ENCODE measurements at regions of chr18 and their contacts with region 1.

Region 1: DNA sequence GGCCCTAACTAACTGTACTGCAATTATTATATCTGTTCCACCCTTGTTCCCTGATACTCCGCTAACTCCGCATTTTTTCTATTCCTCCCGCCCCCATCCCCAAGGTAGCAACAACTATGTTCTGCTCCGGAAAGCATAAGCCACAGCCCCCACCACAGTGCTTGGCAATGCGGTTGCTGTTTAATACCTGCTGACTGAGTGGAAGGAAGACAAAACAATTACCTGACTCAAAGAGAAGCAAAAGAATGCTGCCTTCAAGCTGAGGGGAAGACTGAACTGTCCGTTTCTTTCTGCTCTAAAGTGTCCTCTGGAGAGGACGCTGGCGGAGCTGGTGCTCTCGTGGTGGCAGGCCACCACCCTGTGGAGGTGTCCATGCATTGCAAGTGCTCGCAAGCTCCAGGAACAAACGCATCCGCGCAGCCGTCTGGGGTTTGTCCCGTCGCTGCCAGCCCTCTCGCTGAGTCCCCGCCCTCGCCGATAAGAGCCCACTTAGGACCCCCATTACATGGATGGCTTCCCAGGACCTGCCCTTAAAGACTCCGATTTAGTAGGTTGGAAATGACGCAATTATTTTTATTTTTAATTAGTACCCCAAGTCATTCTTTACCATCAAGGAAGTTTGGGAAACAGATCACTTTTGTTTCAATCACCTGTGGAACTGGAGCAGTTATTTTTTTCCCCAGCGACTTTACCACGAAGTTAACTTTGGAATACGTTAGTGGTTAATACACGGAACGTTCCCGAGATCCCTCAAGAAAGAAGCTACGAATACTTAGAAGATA is 1.6 kb upstream of the MYL12A start:
- DNase-seq: peak; percentile 85
- H3K4me3 Mint-ChIP-seq: peak overlapping the region; percentile 99
- H3K27ac Mint-ChIP-seq: peak overlapping the region; percentile 100
- H3K4me1 Mint-ChIP-seq: peaks cover 29% of the 10 kb centered on the region
- H3K27me3 Mint-ChIP-seq: no peaks in the 10 kb centered on the region

Region 2: GRCh38 chr18:2655178-2655953 is 590.7 kb before region 1 on chr18 and contains the start of gene SMCHD1:
- CTCF ChIA-PET with region 1: no interaction called
- POLR2A ChIA-PET with region 1: interaction called, 21 read pairs
- DNase-seq: peak; percentile 87
- H3K4me3 Mint-ChIP-seq: peak within 1 kb of the TSS; percentile 95
- H3K27ac Mint-ChIP-seq: peak within 1 kb of the TSS; percentile 96
- H3K4me1 Mint-ChIP-seq: peaks cover 26% of the 10 kb centered on the region
- H3K27me3 Mint-ChIP-seq: peaks cover 1% of the 10 kb centered on the region
- total RNA-seq, gene SMCHD1: 162 TPM

Region 3: GRCh38 chr18:2971741-2972552 is 274.1 kb before region 1 on chr18:
- CTCF ChIA-PET with region 1: no interaction called
- POLR2A ChIA-PET with region 1: interaction called, 22 read pairs
- DNase-seq: peak; percentile 82
- H3K4me3 Mint-ChIP-seq: peak overlapping the region; percentile 69
- H3K27ac Mint-ChIP-seq: peak overlapping the region; percentile 94
- H3K4me1 Mint-ChIP-seq: peaks cover 83% of the 10 kb centered on the region
- H3K27me3 Mint-ChIP-seq: no peaks in the 10 kb centered on the region

Region 4: GRCh38 chr18:2994603-2995432 is 251.2 kb before region 1 on chr18:
- CTCF ChIA-PET with region 1: interaction called, 56 read pairs
- POLR2A ChIA-PET with region 1: interaction called, 39 read pairs
- DNase-seq: peak; percentile 77
- H3K4me3 Mint-ChIP-seq: no peak overlapping the region
- H3K27ac Mint-ChIP-seq: peak overlapping the region; percentile 42
- H3K4me1 Mint-ChIP-seq: peaks cover 77% of the 10 kb centered on the region
- H3K27me3 Mint-ChIP-seq: no peaks in the 10 kb centered on the region

Region 5: GRCh38 chr18:3093624-3094337 is 152.3 kb before region 1 on chr18:
- CTCF ChIA-PET with region 1: no interaction called
- POLR2A ChIA-PET with region 1: no interaction called
- DNase-seq: no peak
- H3K4me3 Mint-ChIP-seq: no peak overlapping the region
- H3K27ac Mint-ChIP-seq: no peak overlapping the region
- H3K4me1 Mint-ChIP-seq: peaks cover 11% of the 10 kb centered on the region
- H3K27me3 Mint-ChIP-seq: no peaks in the 10 kb centered on the region

Region 6: DNA sequence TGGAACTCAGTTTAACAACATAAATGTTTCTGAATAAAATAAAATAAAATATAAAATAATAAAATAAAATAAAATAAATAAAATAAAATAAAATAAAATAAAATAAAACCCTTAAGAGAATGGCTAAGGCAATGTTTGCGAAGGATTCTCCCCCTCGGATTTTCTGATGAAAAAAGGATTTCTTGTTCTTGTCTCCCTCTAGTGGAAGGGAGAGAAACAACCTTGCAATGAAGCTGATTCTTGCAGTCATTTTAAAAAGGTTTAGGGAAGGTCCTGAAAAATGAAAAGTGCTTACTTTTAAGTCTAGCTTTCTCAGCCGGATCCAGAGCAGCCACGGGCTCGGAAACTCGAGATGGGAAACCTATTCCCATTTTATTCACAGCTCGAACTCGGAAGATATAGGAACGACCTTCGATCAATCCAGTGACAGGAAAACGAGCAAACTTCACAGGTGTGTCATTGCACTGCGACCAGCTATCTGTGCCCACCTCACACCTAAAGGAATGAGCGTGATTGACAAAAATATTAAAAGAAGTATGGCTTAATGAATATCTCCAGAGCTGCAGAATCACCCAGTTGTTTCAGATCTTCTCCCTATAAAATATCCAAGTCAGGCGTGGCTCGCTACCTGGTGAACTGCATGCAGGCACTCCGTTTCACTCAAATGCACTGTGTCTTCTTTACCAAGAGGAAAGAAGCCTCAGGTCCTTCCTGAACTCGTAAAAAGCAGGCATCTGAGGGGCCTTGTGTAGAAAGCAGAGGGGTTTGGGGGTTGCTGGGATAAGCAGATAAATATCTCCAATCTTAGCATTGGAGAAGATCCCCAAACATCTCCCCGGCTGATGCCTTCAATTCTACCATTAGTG is 94.4 kb before region 1 on chr18:
- CTCF ChIA-PET with region 1: interaction called, 31 read pairs
- POLR2A ChIA-PET with region 1: interaction called, 5 read pairs
- DNase-seq: no peak
- H3K4me3 Mint-ChIP-seq: no peak overlapping the region
- H3K27ac Mint-ChIP-seq: no peak overlapping the region
- H3K4me1 Mint-ChIP-seq: no peaks in the 10 kb centered on the region
- H3K27me3 Mint-ChIP-seq: peaks cover 11% of the 10 kb centered on the region

Region 7: DNA sequence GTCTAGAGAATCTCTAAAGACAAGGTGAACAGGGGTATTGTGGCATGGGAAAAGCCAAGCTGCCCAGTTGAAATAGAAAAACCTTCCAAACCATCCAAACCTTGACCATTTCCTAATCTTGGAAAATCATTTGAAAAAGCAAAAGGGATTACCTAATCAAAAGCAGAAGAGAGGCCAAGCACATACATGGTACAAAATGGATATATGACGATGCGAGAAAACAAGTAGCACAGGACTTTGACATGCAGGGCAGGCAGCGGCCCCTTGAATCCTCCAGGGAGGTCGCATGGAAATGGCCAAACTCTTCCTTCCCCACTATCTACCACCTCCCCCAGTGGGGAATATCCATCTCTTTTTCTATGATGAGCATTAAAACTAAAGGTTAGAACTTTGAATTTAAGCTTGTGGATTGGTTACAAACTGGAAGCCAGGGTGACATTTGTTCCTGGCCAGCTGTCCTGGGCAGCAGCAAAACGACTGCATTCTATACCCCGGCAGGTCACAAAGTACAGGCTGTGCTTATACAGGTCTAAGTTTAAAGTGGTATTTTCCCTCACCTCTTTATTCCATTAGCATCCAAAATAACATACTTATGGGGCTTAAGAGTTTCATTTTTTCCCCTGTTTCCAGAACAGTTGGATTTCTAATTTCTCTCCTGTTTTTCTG is 51.0 kb before region 1 on chr18:
- CTCF ChIA-PET with region 1: no interaction called
- POLR2A ChIA-PET with region 1: no interaction called
- DNase-seq: no peak
- H3K4me3 Mint-ChIP-seq: no peak overlapping the region
- H3K27ac Mint-ChIP-seq: no peak overlapping the region
- H3K4me1 Mint-ChIP-seq: no peaks in the 10 kb centered on the region
- H3K27me3 Mint-ChIP-seq: peaks cover 14% of the 10 kb centered on the region

Region 8: DNA sequence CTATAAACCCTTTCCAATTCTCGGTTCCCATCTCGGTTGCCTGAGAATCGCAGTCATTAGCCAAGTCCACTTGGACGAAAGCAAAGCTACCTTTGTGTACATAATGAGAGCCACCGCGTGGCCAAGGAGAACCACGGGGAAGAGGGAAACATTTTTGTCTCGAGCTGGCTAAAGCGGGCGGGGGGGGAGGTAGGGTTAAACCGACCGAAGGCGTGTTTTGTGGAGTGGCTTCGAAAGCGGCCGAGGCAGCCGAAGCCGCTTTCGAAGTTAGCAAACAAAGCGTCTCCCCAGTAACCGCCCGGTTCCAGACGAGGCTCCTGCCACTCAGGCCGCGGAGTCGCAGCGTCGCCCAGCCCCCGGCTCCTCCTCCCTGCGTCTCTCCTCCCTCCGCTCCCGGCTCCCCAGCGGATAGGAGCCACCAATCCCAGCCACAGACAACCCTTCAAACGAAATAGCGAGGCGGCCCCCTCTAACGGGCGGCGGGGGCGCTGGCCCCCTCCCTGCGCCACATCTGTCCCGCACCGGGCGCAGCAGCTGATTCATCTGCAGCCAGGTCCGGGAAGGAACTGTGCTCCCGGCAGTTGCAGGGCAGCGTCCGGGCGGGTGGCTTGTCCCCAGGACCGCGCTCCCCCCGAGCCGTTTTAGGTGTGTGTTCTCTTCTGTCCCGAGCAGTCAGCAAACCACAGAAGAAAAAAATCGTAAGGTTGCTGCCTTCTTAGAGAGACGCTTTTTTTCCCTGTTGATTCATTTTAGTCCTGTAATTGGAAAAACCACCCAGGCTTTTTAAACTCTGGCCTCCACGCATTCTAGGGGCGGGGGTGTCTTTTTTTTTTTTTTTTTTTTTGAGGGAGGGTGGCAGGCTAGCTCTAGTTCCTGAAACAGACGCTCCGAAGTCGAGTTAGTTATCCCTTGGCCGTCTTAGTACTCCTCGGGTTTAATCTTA is 202.1 kb after region 1 on chr18:
- CTCF ChIA-PET with region 1: no interaction called
- POLR2A ChIA-PET with region 1: interaction called, 38 read pairs
- DNase-seq: peak; percentile 88
- H3K4me3 Mint-ChIP-seq: peak overlapping the region; percentile 92
- H3K27ac Mint-ChIP-seq: peak overlapping the region; percentile 99
- H3K4me1 Mint-ChIP-seq: peaks cover 31% of the 10 kb centered on the region
- H3K27me3 Mint-ChIP-seq: no peaks in the 10 kb centered on the region

Measured in activated CD4-positive, alpha-beta memory T cell treated with anti-CD3 and anti-CD28 coated beads, Interleukin-2, amount 10 ng/mL, durations not matched to agents 7 days and 5 days (primary cell).